PC-9 (cell line): ENCODE measurements at regions of chr11 and their contacts with region 1.

Region 1: DNA sequence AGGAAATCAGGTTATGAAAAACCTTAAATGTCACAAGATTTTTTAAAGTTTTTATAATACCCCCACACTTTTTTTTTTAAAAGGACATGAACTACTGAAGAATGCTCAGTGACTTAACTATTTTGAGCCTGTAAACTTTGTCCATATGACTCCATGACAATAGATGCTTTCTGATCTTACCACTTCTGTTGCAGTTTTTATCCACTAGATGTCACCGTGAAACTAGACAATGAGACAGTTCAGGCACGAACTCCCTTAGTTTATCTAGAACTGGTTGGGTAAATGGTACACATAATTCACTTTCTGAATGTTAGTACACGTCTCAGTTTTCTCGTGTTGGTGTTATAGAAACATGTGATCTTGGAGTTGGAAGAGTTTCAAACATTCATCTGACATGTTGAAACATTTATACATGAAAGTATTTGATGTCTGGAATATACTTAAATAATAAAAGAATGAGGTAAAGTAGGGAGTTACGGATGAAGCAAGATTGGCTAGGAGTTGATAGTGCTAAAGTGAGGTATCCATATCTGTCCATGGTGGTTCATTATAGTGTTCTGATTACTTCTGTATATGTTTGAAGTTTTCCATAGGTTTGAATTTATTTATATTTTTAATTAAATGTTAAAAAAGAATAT is 8.1 kb downstream of the CCDC15 start:
- DNase-seq: peak; percentile 3 to 77
- H3K4me3 ChIP-seq: no peak overlapping the region
- H3K27ac ChIP-seq: no peak overlapping the region
- H3K4me1 ChIP-seq: no peaks in the 10 kb centered on the region
- H3K27me3 ChIP-seq: no peaks in the 10 kb centered on the region
- CTCF ChIP-seq: peak; percentile 85

Region 2: GRCh38 chr11:125075849-125076317 is 113.8 kb after region 1 on chr11:
- CTCF ChIA-PET with region 1: no interaction called
- POLR2A ChIA-PET with region 1: no interaction called
- intact Hi-C with region 1: loop called (anchors 5 kb)
- DNase-seq: peak in 1 of 2 experiments; percentile 55
- H3K4me3 ChIP-seq: no peak overlapping the region
- H3K27ac ChIP-seq: no peak overlapping the region
- H3K4me1 ChIP-seq: peaks cover 63% of the 10 kb centered on the region
- H3K27me3 ChIP-seq: no peaks in the 10 kb centered on the region
- CTCF ChIP-seq: no peak

Region 3: GRCh38 chr11:125141686-125142535 is 179.8 kb after region 1 on chr11:
- CTCF ChIA-PET with region 1: no interaction called
- POLR2A ChIA-PET with region 1: no interaction called
- intact Hi-C with region 1: loop called (anchors 1 kb)
- DNase-seq: peak in 1 of 2 experiments; percentile 46
- H3K4me3 ChIP-seq: no peak overlapping the region
- H3K27ac ChIP-seq: no peak overlapping the region
- H3K4me1 ChIP-seq: no peaks in the 10 kb centered on the region
- H3K27me3 ChIP-seq: no peaks in the 10 kb centered on the region
- CTCF ChIP-seq: peak; percentile 100

Region 4: DNA sequence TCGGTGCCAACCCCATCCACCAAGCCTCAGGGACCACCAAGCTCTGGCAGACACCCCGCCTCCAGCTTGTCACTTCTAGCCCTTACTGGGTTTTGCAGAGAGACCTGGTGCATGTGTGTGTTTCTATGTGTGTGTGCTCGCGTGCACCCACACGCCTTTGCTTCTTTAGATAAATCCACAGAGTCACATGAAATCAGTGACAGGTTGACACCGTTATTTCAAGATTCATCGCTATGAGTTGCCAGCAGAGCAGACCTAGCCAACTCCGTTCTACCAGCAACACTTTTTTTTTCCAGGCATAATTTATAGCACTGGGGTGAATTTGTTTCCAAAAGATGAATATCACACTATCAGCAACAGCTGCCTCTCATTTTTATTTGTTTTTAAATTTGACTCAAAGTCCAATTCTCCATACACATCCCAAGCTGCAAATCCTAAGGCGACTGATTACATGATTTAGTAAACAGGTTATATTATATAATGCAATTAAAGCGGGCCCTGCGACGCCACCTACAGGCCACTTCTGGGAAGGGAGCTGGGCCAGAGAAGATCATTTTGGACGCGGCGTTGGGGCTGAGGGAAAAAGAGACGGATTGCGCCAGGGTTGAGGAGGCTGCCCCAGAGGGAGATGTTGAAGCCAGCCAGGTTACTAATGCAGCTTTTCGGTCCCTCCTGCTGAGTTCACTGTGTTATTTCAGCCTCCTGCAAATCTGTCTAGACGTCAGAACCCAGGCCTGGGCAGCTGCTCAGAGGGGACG is 383.5 kb after region 1 on chr11:
- CTCF ChIA-PET with region 1: no interaction called
- POLR2A ChIA-PET with region 1: no interaction called
- intact Hi-C with region 1: loop called (anchors 2 kb)
- DNase-seq: peak; percentile 44 to 45
- H3K4me3 ChIP-seq: no peak overlapping the region
- H3K27ac ChIP-seq: no peak overlapping the region
- H3K4me1 ChIP-seq: no peaks in the 10 kb centered on the region
- H3K27me3 ChIP-seq: no peaks in the 10 kb centered on the region
- CTCF ChIP-seq: peak; percentile 87

Region 5: DNA sequence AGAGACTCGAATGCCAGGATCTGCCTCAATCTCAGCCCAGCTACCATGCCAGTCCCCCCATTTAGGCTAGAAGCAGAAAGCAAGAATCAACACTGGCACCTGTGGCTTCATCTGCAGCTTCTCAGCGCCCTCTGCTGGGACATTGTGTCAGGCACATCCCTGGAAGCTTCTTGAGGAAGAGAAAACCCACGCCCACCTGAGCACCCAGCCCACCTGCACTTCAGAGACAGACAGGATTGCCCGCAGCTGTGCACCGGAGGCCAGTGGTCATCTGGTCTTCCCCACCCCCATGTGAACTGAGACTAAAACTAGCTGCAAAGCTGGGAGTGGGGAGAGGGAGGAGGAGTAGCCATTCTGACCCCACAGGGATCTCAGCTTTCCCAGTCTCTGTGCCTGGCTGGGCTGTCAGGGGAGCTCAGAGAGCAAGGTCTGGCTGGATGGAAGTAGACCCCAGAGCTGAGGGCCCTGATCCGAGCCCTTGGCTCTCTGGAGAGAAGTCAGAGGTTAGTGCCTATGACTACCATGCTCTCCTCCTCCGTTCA is 467.1 kb after region 1 on chr11:
- CTCF ChIA-PET with region 1: no interaction called
- POLR2A ChIA-PET with region 1: no interaction called
- intact Hi-C with region 1: loop called (anchors 2 kb)
- DNase-seq: peak; percentile 49 to 50
- H3K4me3 ChIP-seq: no peak overlapping the region
- H3K27ac ChIP-seq: no peak overlapping the region
- H3K4me1 ChIP-seq: no peaks in the 10 kb centered on the region
- H3K27me3 ChIP-seq: peaks cover 30% of the 10 kb centered on the region
- CTCF ChIP-seq: peak; percentile 73

Region 6: DNA sequence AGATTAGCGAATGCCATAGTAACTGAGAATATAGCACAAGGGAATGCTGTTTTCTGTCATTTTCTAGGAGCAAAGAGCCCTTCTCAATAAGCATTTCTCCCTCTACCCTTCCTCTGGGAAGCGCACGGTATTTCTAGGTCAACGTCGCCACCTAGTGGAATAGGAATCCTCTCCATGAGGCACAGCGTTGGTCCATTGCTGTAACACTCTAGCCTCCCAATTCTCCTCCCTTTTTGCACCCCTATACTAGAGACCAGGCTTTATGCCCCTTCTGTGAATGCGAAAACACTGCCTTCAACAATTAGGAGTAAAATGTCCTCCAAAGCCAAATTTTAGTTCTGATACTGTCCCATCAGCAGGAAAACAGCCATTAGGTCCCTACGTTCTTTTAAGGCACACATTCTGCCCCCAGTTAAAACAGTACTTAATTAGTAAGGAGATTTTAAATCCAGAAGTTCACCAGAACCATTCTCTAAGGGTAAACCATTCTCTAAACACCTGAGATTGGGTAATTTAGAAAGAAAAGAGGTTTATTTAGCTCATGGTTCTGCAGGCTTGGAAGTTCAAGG is 912.5 kb after region 1 on chr11:
- CTCF ChIA-PET with region 1: no interaction called
- POLR2A ChIA-PET with region 1: no interaction called
- intact Hi-C with region 1: loop called (anchors 10 kb)
- DNase-seq: peak; percentile 26 to 48
- H3K4me3 ChIP-seq: no peak overlapping the region
- H3K27ac ChIP-seq: no peak overlapping the region
- H3K4me1 ChIP-seq: no peaks in the 10 kb centered on the region
- H3K27me3 ChIP-seq: no peaks in the 10 kb centered on the region; the same call in 1 of the 2 replicates
- CTCF ChIP-seq: peak; percentile 78